ENCODE measurements at regions of chr18 and their contacts with region 1.

Region 1: GRCh38 chr18:13520306-13520705 is 206.1 kb downstream of the FAM210A start:
- DNase-seq: no peak
- H3K4me3 ChIP-seq: no peak overlapping the region
- H3K27ac ChIP-seq: no peak overlapping the region
- H3K4me1 ChIP-seq: peaks cover 0 to 4% (median 0%) of the 10 kb centered on the region in 4 experiments
- H3K27me3 ChIP-seq: no peaks in the 10 kb centered on the region

Region 2: DNA sequence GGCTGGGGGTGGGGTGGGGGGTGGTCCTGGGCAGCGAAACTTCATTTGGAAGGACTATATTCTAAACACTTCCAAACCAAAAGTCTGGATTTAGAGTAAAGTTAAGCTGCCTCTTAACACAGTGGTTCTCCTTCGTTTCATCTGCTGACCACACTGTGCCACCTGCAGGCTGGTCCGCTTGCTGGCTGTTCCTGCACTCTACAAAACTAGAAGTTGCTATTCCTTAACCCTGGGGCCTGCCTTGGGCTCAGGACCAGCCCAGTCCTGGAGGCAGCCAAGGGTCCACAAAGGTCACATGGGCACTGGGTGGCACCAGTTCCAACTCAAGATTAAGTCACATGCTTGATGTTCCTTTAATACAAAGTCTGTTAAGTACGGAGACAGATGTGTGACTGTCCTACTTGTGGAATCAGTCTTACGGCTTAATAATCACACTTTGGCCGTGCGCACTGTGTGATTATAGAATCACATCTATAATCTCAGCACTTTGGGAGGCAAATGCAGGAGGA is 10.6 kb after region 1 on chr18:
- CTCF ChIA-PET with region 1: interaction called, 20 read pairs
- POLR2A ChIA-PET with region 1: interaction called, 3 read pairs
- DNase-seq: peak; percentile 67 to 73 (median 69)
- H3K4me3 ChIP-seq: no peak overlapping the region
- H3K27ac ChIP-seq: no peak overlapping the region
- H3K4me1 ChIP-seq: peaks cover 3 to 20% (median 14%) of the 10 kb centered on the region in 4 experiments
- H3K27me3 ChIP-seq: no peaks in the 10 kb centered on the region

Measured in common myeloid progenitor, CD34-positive (primary cell).